Calu3 (cell line): ENCODE measurements at regions of chr2 and their contacts with region 1.

Region 1: DNA sequence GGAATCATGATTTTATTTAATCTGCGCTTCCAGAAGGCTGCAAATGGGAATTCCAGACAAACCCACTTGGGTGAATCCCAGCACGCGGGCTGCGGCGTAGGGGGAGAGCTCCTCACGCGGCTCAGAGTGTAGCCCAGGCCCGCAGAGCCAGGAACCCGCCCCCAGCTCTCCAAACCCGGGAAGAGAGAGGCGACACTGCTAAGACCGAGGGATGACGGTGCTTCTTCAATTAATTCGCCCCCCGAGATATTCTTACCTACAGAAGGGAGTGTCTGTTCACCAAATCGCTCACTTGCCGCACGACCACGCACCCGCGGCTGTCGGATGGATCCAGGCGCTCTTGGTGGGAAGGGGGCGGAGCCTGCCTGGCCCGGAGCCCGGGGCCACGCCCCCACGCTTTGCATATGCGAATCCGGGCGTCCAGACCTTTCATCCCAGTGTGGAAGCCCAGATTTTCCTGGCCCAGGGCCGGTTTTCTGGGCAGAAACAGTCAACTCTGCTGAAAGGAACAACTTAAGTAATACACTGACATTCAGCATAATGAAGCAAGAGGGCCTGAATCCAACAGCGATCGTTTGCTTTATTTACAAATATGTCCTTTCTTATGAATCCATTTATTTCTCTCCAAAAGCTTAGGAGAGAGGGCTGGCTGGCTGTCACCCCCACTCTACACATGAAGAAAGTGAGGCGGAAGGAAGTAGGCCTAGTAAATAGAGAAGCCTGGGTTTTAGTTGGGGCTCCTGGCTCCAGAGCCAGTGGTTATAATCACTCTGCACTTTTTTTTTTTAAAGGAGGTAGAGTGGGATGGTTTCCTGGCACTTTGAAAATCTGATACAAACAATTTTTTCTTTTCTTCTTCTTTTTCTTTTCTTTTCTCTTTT is at the start of gene SLC19A3:
- DNase-seq: peak; percentile 95
- H3K4me3 Mint-ChIP-seq: peak within 1 kb of the TSS; percentile 75
- H3K27ac Mint-ChIP-seq: peak within 1 kb of the TSS; percentile 63
- H3K4me1 Mint-ChIP-seq: peaks cover 52% of the 10 kb centered on the region
- H3K27me3 Mint-ChIP-seq: no peaks in the 10 kb centered on the region
- CTCF ChIP-seq: no peak
- total RNA-seq, gene SLC19A3: 63.8 and 82.4 TPM in 2 replicates

Region 2: DNA sequence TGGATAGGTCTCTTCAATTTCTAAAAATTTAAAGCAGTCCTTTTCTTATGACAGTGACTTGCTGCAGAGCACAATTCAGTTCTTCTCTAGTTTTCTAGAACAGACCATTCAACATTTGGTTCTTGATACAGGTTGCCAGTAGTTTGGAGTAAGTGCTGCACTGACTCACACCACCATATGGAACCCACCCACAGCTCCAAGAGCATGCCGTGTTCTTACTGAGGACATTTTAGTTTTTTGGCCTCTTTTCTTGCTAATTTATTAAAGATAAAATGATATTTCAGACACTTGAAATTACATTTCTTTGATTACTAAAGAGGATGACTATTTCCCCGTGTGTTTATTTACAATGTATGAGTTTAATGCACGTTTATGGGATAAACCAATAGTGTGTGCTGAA is 673.9 kb before region 1 on chr2:
- CTCF ChIA-PET with region 1: no interaction called
- intact Hi-C with region 1: no loop called
- DNase-seq: no peak
- H3K4me3 Mint-ChIP-seq: no peak overlapping the region
- H3K27ac Mint-ChIP-seq: no peak overlapping the region
- H3K4me1 Mint-ChIP-seq: no peaks in the 10 kb centered on the region
- H3K27me3 Mint-ChIP-seq: no peaks in the 10 kb centered on the region
- CTCF ChIP-seq: no peak

Region 3: DNA sequence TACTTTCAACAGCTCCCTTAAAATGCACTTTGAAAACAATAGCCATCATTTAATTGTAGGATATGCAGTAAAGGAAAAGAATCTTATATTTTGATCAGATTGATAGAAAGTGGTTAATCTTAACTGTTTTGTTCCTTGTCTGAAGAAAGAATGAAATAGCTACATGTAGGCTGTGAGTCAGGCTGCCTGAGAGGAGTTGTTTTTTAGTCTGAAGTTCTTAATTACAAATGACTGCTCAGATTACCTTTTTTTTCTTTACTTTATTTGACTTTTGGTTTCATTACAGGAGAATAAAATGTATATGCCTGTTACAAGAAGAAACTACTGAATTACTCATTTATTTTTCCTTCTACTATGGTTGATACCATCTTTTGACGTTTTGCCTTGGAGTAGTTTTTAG is 189.1 kb before region 1 on chr2:
- CTCF ChIA-PET with region 1: no interaction called
- intact Hi-C with region 1: no loop called
- DNase-seq: no peak
- H3K4me3 Mint-ChIP-seq: no peak overlapping the region
- H3K27ac Mint-ChIP-seq: peak overlapping the region; percentile 33
- H3K4me1 Mint-ChIP-seq: no peaks in the 10 kb centered on the region
- H3K27me3 Mint-ChIP-seq: no peaks in the 10 kb centered on the region
- CTCF ChIP-seq: no peak

Region 4: GRCh38 chr2:227655454-227655853 is 62.5 kb before region 1 on chr2:
- CTCF ChIA-PET with region 1: interaction called, 6 read pairs
- intact Hi-C with region 1: loop called (anchors 5 kb)
- DNase-seq: peak; percentile 9
- H3K4me3 Mint-ChIP-seq: no peak overlapping the region
- H3K27ac Mint-ChIP-seq: peak overlapping the region; percentile 14
- H3K4me1 Mint-ChIP-seq: peaks cover 25% of the 10 kb centered on the region
- H3K27me3 Mint-ChIP-seq: no peaks in the 10 kb centered on the region
- CTCF ChIP-seq: no peak

Region 5: DNA sequence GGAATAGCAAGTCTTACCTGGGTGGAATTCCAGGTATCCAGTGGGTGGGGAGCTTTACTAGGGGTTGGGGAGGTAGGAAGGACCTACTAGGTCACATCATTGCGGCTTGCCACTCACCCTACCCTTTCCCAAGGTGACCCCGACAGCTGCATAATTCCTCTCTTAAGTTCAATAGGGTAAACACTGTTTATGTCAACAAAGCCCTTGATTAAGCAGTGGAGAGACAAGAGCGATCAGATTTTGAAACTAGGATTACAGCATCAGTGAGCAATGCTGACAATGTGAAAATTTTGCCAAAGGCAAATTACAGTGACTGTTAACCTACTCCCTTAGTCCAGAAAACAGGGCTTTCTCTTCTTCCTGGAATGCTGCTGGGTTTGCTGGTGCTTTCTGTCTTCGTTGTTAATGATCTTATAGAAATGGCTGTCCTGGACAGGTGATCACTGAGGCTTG is 14.6 kb before region 1 on chr2:
- CTCF ChIA-PET with region 1: interaction called, 11 read pairs
- intact Hi-C with region 1: no loop called
- DNase-seq: peak; percentile 33
- H3K4me3 Mint-ChIP-seq: no peak overlapping the region
- H3K27ac Mint-ChIP-seq: peak overlapping the region; percentile 70
- H3K4me1 Mint-ChIP-seq: peaks cover 42% of the 10 kb centered on the region
- H3K27me3 Mint-ChIP-seq: no peaks in the 10 kb centered on the region
- CTCF ChIP-seq: no peak

Region 6: DNA sequence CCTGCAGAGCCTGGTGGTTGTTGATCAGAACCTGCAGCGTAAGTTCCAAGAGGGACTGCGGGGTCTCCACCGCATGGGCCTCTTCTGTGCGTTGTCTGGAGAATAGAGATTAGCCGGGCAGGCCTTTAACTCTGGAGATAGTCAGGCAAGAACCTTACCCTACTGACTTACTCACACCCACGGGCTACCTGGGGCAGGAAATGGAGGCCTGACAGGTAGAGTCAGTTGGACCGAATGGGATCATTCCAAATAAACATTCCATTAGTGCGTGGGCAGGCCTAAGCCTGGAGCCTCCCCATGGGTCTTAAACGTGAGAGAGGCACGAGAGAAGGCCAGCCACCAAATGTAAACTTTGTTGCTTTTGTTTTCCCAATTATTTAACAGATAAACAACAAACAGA is 26.3 kb after region 1 on chr2:
- CTCF ChIA-PET with region 1: interaction called, 12 read pairs
- intact Hi-C with region 1: no loop called
- DNase-seq: no peak
- H3K4me3 Mint-ChIP-seq: no peak overlapping the region
- H3K27ac Mint-ChIP-seq: peak overlapping the region; percentile 21
- H3K4me1 Mint-ChIP-seq: peaks cover 16% of the 10 kb centered on the region
- H3K27me3 Mint-ChIP-seq: no peaks in the 10 kb centered on the region
- CTCF ChIP-seq: no peak

Region 7: GRCh38 chr2:227960317-227960716 is 242.4 kb after region 1 on chr2:
- CTCF ChIA-PET with region 1: no interaction called
- intact Hi-C with region 1: no loop called
- DNase-seq: no peak
- H3K4me3 Mint-ChIP-seq: no peak overlapping the region
- H3K27ac Mint-ChIP-seq: no peak overlapping the region
- H3K4me1 Mint-ChIP-seq: no peaks in the 10 kb centered on the region
- H3K27me3 Mint-ChIP-seq: no peaks in the 10 kb centered on the region
- CTCF ChIP-seq: no peak